IMR-90 (cell line): ENCODE measurements at regions of chr12 and their contacts with region 1.

Region 1: DNA sequence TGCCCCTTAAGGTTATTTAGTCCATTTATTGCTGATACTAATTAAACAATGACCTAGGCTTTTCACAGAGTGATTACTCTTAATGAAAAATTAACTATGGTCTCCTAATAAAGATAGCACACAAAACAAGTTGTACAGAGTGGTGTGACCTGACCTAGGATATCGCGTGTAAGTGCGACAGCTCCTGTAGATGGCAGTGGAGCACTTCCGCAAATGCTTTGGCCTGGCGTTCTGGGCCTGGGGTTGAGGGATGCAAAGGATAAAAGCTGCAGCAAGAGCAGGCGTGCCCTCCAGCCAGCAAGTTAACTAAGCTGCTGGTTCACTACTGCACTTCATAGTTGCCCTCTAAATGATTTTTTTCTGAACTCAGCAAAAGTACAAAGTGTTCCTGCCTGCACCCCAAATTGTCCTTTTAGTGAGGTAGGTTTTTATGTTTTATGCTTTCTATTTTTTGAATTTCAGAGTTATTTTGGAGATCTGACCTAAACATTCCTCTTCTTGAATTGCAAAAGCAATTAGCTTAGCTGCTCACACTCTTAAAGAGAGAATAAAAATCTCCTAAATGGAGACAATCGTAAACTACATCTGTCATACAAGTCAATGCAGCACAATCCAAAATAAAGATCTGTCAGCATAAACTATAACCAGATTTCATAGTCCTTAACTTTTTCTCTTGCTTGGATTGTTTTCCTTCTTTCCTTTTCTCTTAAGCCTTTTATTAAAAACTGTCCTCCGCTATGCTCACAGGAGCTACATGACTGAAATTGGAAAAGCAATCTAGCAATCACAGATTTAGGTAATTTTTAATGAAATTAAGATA is 379.6 kb downstream of the LRIG3 start:
- DNase-seq: peak; percentile 91
- ATAC-seq: peak; percentile 92
- H3K4me3 ChIP-seq: no peak overlapping the region
- H3K27ac ChIP-seq: peak overlapping the region; percentile 16; the same call in 1 of the 2 replicates
- H3K4me1 ChIP-seq: peaks cover 7% of the 10 kb centered on the region
- H3K27me3 ChIP-seq: no peaks in the 10 kb centered on the region
- CTCF ChIP-seq: peak; percentile 93
- POLR2A ChIP-seq: no peak
- RAD21 ChIP-seq: peak; percentile 98

Region 2: GRCh38 chr12:57905812-57906475 is 634.7 kb before region 1 on chr12:
- CTCF ChIA-PET with region 1: no interaction called
- POLR2A ChIA-PET with region 1: no interaction called
- dilution Hi-C with region 1: no loop called
- in situ Hi-C with region 1: no loop called
- intact Hi-C with region 1: no loop called
- DNase-seq: no peak
- ATAC-seq: no peak
- H3K4me3 ChIP-seq: no peak overlapping the region
- H3K27ac ChIP-seq: no peak overlapping the region
- H3K4me1 ChIP-seq: peaks cover 3% of the 10 kb centered on the region
- H3K27me3 ChIP-seq: peaks cover 31% of the 10 kb centered on the region
- CTCF ChIP-seq: no peak
- POLR2A ChIP-seq: no peak
- RAD21 ChIP-seq: no peak

Region 3: DNA sequence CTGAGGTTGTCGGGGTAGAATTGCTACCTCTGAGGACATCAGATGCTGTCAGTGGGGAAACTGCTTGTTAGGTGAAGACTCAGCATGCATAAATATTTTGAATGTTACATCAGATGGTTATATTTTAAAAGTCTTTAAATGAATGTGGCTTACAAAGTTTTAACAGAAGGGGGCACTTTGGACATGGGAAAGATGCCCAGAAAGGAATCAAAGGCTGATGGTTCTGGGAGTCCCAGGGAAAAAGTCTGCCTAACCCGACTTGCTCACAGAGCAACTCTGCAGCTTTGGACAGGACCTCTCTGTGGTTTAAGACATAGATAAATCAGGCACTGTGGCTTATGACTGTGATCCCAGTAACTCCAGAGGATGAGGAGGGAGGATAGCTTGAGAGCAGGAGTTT is 124.5 kb before region 1 on chr12:
- CTCF ChIA-PET with region 1: interaction called, 14 read pairs
- POLR2A ChIA-PET with region 1: no interaction called
- dilution Hi-C with region 1: no loop called
- in situ Hi-C with region 1: no loop called
- intact Hi-C with region 1: no loop called
- DNase-seq: peak; percentile 88
- ATAC-seq: peak; percentile 73
- H3K4me3 ChIP-seq: no peak overlapping the region
- H3K27ac ChIP-seq: peak overlapping the region; percentile 60
- H3K4me1 ChIP-seq: peaks cover 12% of the 10 kb centered on the region
- H3K27me3 ChIP-seq: no peaks in the 10 kb centered on the region
- CTCF ChIP-seq: peak; percentile 61
- POLR2A ChIP-seq: no peak
- RAD21 ChIP-seq: peak; percentile 70

Region 4: GRCh38 chr12:58648176-58648575 is 107.5 kb after region 1 on chr12:
- CTCF ChIA-PET with region 1: no interaction called
- POLR2A ChIA-PET with region 1: no interaction called
- dilution Hi-C with region 1: no loop called
- in situ Hi-C with region 1: no loop called
- intact Hi-C with region 1: no loop called
- DNase-seq: no peak
- ATAC-seq: peak; percentile 21; the same call in 1 of the 2 replicates
- H3K4me3 ChIP-seq: no peak overlapping the region
- H3K27ac ChIP-seq: peak overlapping the region; percentile 36; the same call in 1 of the 2 replicates
- H3K4me1 ChIP-seq: peaks cover 3% of the 10 kb centered on the region
- H3K27me3 ChIP-seq: no peaks in the 10 kb centered on the region
- CTCF ChIP-seq: no peak
- POLR2A ChIP-seq: no peak
- RAD21 ChIP-seq: no peak

Region 5: DNA sequence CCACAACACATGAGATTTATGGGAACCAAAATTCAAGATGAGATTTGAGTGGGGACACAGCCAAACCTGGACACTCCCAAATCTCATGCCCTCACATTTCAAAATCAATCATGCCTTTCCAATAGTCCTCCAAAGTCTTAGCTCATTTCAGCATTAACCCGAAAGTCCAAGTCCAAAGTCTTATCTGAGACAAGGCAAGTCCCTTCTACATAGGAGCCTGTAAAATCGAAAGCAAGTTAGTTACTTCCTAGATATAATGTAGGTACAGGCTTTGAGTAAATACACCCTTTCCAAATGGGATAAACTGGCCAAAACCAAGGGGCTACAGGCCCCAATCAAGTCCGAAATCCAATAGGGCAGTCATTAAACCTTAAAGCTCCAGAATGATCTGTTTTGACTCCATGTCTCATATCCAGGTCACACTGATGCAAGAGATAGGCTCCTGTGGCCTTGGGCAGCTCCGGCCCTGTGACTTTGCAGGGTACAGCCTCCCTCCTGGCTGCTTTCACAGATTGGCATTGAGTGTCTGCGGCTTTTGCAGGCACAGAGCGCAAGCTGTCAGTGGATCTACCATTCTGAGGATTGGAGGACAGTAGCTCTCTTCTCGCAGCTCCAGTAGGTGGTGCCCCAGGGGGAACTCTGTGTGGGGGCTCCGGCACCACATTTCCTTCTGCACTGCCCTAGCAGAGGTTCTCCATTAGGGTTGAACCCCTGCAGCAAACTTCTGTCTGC is 319.5 kb after region 1 on chr12:
- CTCF ChIA-PET with region 1: no interaction called
- POLR2A ChIA-PET with region 1: no interaction called
- dilution Hi-C with region 1: no loop called
- in situ Hi-C with region 1: no loop called
- intact Hi-C with region 1: loop called (anchors 2 kb)
- DNase-seq: no peak
- ATAC-seq: peak; percentile 14; the same call in 1 of the 2 replicates
- H3K4me3 ChIP-seq: no peak overlapping the region
- H3K27ac ChIP-seq: no peak overlapping the region
- H3K4me1 ChIP-seq: no peaks in the 10 kb centered on the region
- H3K27me3 ChIP-seq: no peaks in the 10 kb centered on the region
- CTCF ChIP-seq: no peak
- POLR2A ChIP-seq: no peak
- RAD21 ChIP-seq: no peak

Region 6: DNA sequence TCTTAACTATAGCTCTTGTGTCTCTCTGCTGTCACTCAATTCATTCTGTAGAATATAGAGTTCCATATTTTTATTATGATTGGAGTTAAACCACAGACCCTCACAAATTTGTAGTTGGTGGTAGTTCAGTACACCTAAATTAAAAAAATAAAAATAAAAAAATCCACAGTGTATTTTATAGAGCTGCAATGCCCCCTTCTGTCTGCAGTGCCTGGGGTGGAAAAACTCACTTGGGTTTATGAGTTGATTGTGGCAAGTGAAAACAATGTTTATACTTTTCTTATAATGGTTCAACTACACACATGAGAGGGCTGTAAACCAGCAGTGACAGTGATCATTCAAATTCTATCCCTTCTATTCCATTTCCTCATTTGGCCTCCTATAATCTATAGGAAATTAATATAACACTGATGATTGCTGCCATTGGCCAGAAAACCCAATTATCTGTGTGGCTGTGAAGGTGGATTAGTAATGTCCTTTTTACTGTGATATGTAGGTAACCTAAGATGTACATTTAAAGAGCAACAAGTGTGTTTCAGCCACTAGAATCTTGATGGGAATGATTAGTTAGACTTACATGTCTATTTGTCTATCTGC is 546.5 kb after region 1 on chr12:
- CTCF ChIA-PET with region 1: interaction called, 30 read pairs
- POLR2A ChIA-PET with region 1: no interaction called
- dilution Hi-C with region 1: no loop called
- in situ Hi-C with region 1: loop called (anchors 5 kb)
- intact Hi-C with region 1: loop called (anchors 1 kb)
- DNase-seq: peak; percentile 39
- ATAC-seq: peak; percentile 69
- H3K4me3 ChIP-seq: no peak overlapping the region
- H3K27ac ChIP-seq: no peak overlapping the region
- H3K4me1 ChIP-seq: peaks cover 13% of the 10 kb centered on the region
- H3K27me3 ChIP-seq: no peaks in the 10 kb centered on the region
- CTCF ChIP-seq: peak; percentile 81
- POLR2A ChIP-seq: no peak
- RAD21 ChIP-seq: peak; percentile 74

Region 7: GRCh38 chr12:59149997-59150642 is 609.4 kb after region 1 on chr12:
- CTCF ChIA-PET with region 1: no interaction called
- POLR2A ChIA-PET with region 1: no interaction called
- dilution Hi-C with region 1: no loop called
- in situ Hi-C with region 1: loop called (anchors 10 kb)
- intact Hi-C with region 1: loop called (anchors 1 kb)
- DNase-seq: peak; percentile 84
- ATAC-seq: peak; percentile 96
- H3K4me3 ChIP-seq: no peak overlapping the region
- H3K27ac ChIP-seq: peak overlapping the region; percentile 2; the same call in 1 of the 2 replicates
- H3K4me1 ChIP-seq: peaks cover 4% of the 10 kb centered on the region; the same call in 1 of the 2 replicates
- H3K27me3 ChIP-seq: no peaks in the 10 kb centered on the region
- CTCF ChIP-seq: peak; percentile 100
- POLR2A ChIP-seq: no peak
- RAD21 ChIP-seq: peak; percentile 83